Heart right ventricle (tissue), 16 donors: ENCODE measurements at regions of chr6 and their contacts with region 1.

Region 1: DNA sequence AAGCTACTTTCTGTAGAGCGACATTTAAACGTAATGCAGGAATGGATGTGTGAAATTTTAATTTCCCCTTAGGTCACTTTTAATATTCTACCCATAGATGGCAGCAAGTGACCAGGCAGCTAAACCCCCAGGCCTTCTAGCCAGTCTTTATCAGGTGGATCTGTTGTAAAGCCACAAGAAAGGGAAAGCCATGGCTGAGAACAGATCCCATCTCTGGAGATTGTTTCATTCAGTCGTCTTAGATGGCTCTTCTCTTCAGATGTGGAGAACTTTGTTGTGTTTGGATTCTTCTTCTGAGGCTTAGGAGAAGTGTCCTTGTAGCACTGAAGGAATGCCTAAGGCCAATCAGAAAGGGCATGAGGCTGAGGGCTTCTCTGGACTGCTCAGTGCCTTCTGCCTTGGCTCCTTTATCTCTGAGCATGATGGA is 15.8 kb upstream of the RNF182 start:
- DNase-seq: peak in 1 of 2 donors; percentile 49
- ATAC-seq: peak in 5 of 8 donors; percentile 62 to 79 (median 66)
- H3K4me3 ChIP-seq: no peak overlapping the region
- H3K27ac ChIP-seq: no peak overlapping the region
- H3K4me1 ChIP-seq: peaks cover 0 to 5% (median 0%) of the 10 kb centered on the region in 9 donors
- H3K27me3 ChIP-seq: peaks cover 0 to 36% (median 20%) of the 10 kb centered on the region in 7 donors
- CTCF ChIP-seq: peak; percentile 70 to 87 (median 80)

Region 2: GRCh38 chr6:13795041-13795750 is 113.8 kb before region 1 on chr6:
- intact Hi-C with region 1: loop called in 1 of 10 experiments (anchors 10 kb)
- DNase-seq: peak; percentile 72 to 85
- ATAC-seq: peak; percentile 70 to 91 (median 87)
- H3K4me3 ChIP-seq: no peak overlapping the region
- H3K27ac ChIP-seq: no peak overlapping the region
- H3K4me1 ChIP-seq: peaks cover 0 to 15% (median 6%) of the 10 kb centered on the region in 9 donors
- H3K27me3 ChIP-seq: no peaks in the 10 kb centered on the region
- CTCF ChIP-seq: peak in 8 of 9 donors; percentile 84 to 95 (median 92)

Region 3: DNA sequence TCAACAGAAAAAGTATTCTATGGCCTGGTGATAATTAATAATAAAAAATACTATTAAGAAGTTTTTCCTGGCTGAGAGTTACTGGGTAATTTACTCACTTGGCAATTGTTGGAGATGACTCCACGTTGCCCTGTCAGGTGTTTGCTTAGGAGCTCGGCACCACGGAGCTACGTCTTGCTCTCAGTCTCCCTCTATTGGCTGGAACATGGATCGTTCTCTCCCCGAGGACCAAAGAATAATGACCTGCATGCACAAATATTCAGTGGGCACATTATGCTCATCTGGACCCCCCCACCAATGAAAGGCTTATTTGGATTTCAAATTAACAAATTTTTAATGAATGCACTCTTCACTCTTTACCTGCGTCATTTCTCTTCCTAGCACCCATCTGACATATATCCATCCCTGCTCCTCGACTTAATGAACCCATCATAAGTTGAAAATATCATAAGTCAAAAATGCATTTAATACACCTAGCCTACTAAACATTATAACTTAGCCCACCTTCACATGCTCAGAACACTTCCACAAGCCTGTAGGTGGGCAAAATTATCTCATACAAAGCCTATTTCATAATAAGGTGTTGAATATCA is 137.6 kb after region 1 on chr6:
- intact Hi-C with region 1: loop called in 7 of 10 experiments (anchors 1 to 10 kb)
- DNase-seq: no peak
- ATAC-seq: peak in 1 of 8 donors; percentile 43
- H3K4me3 ChIP-seq: no peak overlapping the region
- H3K27ac ChIP-seq: no peak overlapping the region
- H3K4me1 ChIP-seq: no peaks in the 10 kb centered on the region
- H3K27me3 ChIP-seq: peaks cover 0 to 43% (median 24%) of the 10 kb centered on the region in 7 donors
- CTCF ChIP-seq: peak; percentile 27 to 71 (median 63)

Region 4: DNA sequence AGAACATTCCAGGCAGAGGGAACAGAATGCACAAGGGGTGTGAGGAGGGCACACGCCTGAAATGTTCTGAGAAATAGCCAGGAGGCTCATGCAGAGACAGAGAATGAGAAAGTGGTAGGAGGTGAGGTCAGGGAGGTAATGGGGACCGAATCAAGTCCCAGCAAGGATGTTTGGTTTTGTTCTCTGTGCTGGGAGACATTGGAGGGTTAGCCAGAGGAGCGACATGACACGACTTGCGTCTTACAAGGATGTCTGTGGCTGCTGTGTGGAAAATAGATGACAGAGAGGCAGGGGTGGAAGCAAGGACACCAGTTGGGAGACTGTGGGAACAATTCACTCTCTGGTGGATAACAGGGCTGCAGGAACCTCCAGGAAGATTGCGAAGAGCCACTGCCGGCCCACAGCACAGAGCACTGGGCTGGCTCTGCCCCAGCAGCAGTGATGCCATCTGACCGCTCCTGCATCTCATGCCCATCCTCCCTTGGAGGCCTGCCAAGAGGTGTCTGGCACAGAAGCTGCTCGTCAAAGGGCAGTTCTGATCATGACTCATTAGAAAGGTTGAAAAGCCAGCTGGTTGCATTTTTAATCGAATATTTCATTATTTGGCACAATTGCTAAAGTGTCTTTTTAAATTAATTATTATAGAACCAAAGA is 150.9 kb after region 1 on chr6:
- intact Hi-C with region 1: loop called in 7 of 10 experiments (anchors 5 kb)
- DNase-seq: peak; percentile 39 to 47
- ATAC-seq: peak in 6 of 8 donors; percentile 72 to 94 (median 75)
- H3K4me3 ChIP-seq: no peak overlapping the region
- H3K27ac ChIP-seq: no peak overlapping the region
- H3K4me1 ChIP-seq: peaks cover 0 to 8% (median 0%) of the 10 kb centered on the region in 9 donors
- H3K27me3 ChIP-seq: peaks cover 0 to 36% (median 7%) of the 10 kb centered on the region in 7 donors
- CTCF ChIP-seq: no peak

Region 5: GRCh38 chr6:14066782-14067406 is 157.9 kb after region 1 on chr6:
- intact Hi-C with region 1: loop called (anchors 1 to 5 kb)
- DNase-seq: peak in 1 of 2 donors; percentile 19
- ATAC-seq: peak in 7 of 8 donors; percentile 49 to 81 (median 71)
- H3K4me3 ChIP-seq: no peak overlapping the region
- H3K27ac ChIP-seq: no peak overlapping the region
- H3K4me1 ChIP-seq: no peaks in the 10 kb centered on the region
- H3K27me3 ChIP-seq: peaks cover 0 to 22% (median 0%) of the 10 kb centered on the region in 7 donors
- CTCF ChIP-seq: peak; percentile 36 to 77 (median 71)

Region 6: DNA sequence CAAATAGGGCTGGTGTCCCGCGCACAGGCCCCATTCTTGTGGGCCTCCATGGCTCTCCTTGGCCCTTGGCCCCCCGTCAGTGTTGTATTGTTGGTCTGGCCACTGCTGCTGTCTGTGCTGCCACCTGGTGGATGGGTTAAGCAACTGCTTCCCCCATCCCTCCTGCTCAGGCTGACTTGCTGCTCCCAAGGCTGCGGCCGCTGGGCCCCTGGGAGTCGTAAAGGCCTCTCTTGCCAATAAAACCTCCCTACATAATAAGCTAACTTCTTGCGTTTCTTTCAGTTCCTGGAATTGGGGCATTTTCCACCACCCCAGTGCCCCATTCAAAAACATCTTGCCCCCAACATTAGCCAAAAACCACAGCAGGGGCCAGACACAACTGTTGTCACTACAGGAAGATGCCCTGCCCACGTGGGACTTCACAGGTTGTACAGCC is 235.7 kb after region 1 on chr6:
- intact Hi-C with region 1: loop called in 9 of 10 experiments (anchors 1 to 10 kb)
- DNase-seq: peak; percentile 58 to 60
- ATAC-seq: peak; percentile 70 to 83 (median 78)
- H3K4me3 ChIP-seq: no peak overlapping the region
- H3K27ac ChIP-seq: no peak overlapping the region
- H3K4me1 ChIP-seq: peaks cover 0 to 8% (median 0%) of the 10 kb centered on the region in 9 donors
- H3K27me3 ChIP-seq: no peaks in the 10 kb centered on the region
- CTCF ChIP-seq: peak; percentile 81 to 98 (median 92)